Tibial artery (tissue), 4 donors: ENCODE measurements at regions of chr16 and their contacts with region 1.

Region 1: DNA sequence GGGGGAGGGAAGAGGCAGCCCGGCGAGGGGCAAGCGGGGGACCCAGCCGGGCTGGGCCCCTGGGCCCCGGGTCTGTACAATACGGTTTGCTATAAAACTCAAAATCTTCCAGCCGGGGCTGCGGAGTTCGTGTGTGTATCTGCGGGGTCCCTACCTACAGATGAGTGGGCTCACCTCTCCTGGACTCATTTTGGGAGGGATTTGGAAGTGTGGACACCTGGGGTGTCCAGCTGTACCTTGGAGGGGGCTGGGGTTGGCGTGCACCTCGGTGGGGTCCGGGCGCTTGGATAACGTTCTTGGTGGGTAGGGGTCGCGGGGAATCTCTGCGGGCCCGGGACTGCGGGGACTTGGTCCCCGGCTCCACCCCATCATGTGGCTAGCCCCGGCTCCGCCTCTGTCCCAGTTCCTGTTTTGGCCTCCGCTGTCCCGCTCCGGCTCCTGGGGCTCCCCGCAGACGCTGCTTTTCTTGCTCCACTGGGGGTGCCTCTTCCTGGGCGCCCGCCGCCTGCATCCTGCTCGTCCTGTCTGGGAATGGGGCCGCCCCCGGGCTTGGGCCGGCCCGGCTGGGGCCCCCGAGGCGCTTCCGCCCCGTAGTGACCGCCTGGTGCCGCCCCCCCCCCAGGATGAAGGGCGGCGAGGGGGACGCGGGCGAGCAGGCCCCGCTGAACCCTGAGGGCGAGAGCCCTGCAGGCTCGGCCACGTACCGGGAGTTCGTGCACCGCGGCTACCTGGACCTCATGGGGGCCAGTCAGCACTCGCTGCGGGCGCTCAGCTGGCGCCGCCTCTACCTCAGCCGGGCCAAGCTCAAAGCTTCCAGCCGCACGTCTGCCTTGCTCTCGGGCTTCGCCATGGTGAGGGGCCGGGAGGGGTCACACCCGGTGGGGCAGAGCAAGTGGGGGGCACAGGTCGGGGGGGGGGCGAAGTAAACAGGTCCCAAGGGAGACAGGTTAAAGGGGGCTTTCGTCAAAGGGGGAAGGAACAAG is at the start of gene ORAI3:
- DNase-seq: peak; percentile 81 to 89
- H3K4me3 ChIP-seq: peak within 1 kb of the TSS; percentile 82 to 91
- H3K27ac ChIP-seq: peak within 1 kb of the TSS; percentile 89
- H3K4me1 ChIP-seq: peaks cover 0 to 61% (median 49%) of the 10 kb centered on the region in 4 donors
- H3K27me3 ChIP-seq: no peaks in the 10 kb centered on the region
- CTCF ChIP-seq: no peak

Region 2: GRCh38 chr16:30786936-30787612 is 161.9 kb before region 1 on chr16 and contains the start of gene ZNF629:
- intact Hi-C with region 1: no loop called
- DNase-seq: peak; percentile 69 to 83
- H3K4me3 ChIP-seq: peak within 1 kb of the TSS; percentile 84 to 88
- H3K27ac ChIP-seq: peak within 1 kb of the TSS; percentile 87 to 94
- H3K4me1 ChIP-seq: peaks cover 0 to 25% (median 16%) of the 10 kb centered on the region in 4 donors
- H3K27me3 ChIP-seq: no peaks in the 10 kb centered on the region
- CTCF ChIP-seq: peak in 1 of 2 experiments; percentile 4

Region 3: DNA sequence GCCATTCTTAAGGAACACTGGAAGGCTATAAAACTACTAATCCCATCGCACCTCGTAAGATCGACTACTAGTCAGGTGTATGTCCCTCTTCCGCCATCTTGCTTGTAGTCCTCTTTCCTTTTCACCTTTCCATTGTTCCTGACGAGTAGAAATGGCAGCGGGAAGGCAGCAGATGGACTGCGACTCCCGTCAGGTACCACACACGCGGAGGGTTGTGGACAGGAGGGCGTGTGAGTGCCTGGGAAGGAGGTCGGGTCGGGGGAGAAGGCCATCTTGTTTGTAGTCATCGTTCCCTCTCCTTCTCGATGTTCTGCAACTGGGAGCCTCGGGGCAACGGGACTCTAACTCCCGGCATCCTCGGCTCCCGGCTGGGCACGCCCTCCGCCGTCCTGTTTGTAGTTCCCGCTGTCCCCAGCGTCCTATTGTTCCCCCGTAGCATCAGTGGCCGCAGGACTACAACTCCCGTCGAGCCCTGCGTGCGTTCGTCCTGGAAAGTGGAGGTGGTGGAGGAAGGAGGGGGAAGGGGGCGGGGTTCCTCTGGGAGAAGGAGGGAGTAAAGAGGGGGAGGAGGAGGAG is 25.9 kb before region 1 on chr16:
- intact Hi-C with region 1: loop called (anchors 2 kb)
- DNase-seq: peak; percentile 100
- H3K4me3 ChIP-seq: peak overlapping the region; percentile 82 to 97
- H3K27ac ChIP-seq: peak overlapping the region; percentile 89 to 98
- H3K4me1 ChIP-seq: peaks cover 0 to 38% (median 22%) of the 10 kb centered on the region in 4 donors
- H3K27me3 ChIP-seq: no peaks in the 10 kb centered on the region
- CTCF ChIP-seq: no peak